ENCODE measurements at regions of chr4 and their contacts with region 1.

Region 1: DNA sequence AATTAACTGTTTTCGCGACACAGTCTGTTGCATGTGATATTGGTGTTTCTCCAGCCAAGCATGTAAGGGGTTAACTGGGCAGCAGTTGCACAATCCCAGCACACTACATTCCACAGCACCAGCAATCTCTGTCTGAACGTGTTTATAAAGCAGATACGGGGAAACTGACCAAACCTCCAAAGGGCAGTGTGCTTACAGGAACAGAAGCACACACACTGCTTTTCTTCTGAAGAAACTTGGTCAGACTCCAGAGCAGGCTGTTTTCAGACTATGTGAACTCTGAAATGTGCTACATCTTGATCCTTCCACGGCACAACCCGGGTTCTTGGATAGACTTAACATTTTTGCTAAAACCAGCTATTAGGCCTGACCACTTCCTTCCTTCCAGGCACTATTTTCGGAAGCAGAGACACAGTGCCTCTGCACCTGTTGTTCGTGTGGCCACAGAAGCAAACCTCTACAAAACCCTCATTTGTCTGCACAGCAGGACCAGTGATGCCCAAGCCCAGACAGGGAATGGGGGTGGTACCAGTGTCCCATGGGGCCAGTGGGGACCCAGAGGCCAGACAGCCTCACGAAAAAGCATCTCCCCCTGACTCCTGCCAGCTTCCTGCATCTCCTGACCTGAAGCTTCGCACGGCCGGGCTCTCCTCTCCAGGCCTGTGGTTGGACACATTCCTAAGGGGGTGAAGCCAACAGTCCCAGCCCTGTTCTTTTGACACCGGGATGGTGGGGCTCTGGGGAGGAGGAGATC is 90.1 kb downstream of the IRF2 start:
- DNase-seq: peak; percentile 86
- ATAC-seq: peak; percentile 77
- H3K4me3 ChIP-seq: peak overlapping the region; percentile 13 to 48 (median 21); a peak in 5 of 6 replicates
- H3K27ac ChIP-seq: peak overlapping the region; percentile 63
- H3K4me1 ChIP-seq: peaks cover 61% of the 10 kb centered on the region
- H3K27me3 ChIP-seq: no peaks in the 10 kb centered on the region
- CTCF ChIP-seq: no peak
- EP300 ChIP-seq: peak; percentile 77 to 87; a peak in 3 of 4 replicates
- POLR2A ChIP-seq: peak in 1 of 2 experiments; percentile 64; a peak in 2 of 4 replicates
- RAD21 ChIP-seq: no peak

Region 2: DNA sequence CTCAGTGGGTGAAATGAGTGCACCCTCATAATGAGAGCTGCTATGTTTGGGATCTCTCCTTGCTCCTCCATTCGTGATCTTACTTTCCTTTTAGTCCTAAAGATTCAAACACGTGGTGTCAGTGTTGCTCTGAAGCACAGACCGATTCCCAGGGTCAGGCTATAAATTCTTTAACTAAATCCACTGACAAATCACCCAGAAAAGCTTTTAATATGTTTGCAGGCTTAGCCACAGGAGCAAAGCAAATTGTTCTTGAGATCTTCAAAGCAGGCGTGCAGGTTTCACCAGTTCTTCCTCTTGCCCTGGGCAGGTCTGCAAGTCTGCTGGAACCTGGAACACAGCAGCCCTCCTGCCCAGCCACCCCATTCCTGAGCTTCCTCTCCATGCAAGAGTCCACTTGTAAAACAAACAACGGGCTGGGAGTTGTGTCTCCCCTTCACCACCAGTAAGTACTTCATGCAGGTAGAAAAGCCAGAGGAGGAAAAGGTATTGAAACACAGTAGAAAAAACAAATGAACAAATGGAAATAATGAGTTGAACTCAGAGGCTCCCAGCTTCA is 96.5 kb before region 1 on chr4:
- CTCF ChIA-PET with region 1: no interaction called
- POLR2A ChIA-PET with region 1: no interaction called
- in situ Hi-C with region 1: no loop called
- intact Hi-C with region 1: loop called (anchors 1 kb)
- DNase-seq: peak; percentile 64
- ATAC-seq: peak; percentile 92
- H3K4me3 ChIP-seq: peak overlapping the region; percentile 38 to 47 (median 44); a peak in 5 of 6 replicates
- H3K27ac ChIP-seq: peak overlapping the region; percentile 44
- H3K4me1 ChIP-seq: peaks cover 58% of the 10 kb centered on the region
- H3K27me3 ChIP-seq: no peaks in the 10 kb centered on the region
- CTCF ChIP-seq: peak; percentile 75
- EP300 ChIP-seq: no peak; a peak in 1 of 4 replicates
- POLR2A ChIP-seq: no peak
- RAD21 ChIP-seq: peak; percentile 43; the same call in 1 of the 2 replicates

Region 3: GRCh38 chr4:184364100-184364921 is 19.9 kb before region 1 on chr4:
- CTCF ChIA-PET with region 1: no interaction called
- POLR2A ChIA-PET with region 1: interaction called, 6 read pairs
- in situ Hi-C with region 1: no loop called
- intact Hi-C with region 1: loop called (anchors 2 kb)
- DNase-seq: peak; percentile 97
- ATAC-seq: peak; percentile 97
- H3K4me3 ChIP-seq: peak overlapping the region in 1 of 3 experiments; percentile 43; a peak in 2 of 6 replicates
- H3K27ac ChIP-seq: peak overlapping the region; percentile 81
- H3K4me1 ChIP-seq: peaks cover 49% of the 10 kb centered on the region
- H3K27me3 ChIP-seq: no peaks in the 10 kb centered on the region
- CTCF ChIP-seq: 0 out of 2 replicates have a peak, but pooled peaks have one; percentile 2
- EP300 ChIP-seq: peak in 1 of 2 experiments; percentile 93; a peak in 2 of 4 replicates
- POLR2A ChIP-seq: peak in 1 of 2 experiments; percentile 56; a peak in 2 of 4 replicates
- RAD21 ChIP-seq: no peak

Region 4: DNA sequence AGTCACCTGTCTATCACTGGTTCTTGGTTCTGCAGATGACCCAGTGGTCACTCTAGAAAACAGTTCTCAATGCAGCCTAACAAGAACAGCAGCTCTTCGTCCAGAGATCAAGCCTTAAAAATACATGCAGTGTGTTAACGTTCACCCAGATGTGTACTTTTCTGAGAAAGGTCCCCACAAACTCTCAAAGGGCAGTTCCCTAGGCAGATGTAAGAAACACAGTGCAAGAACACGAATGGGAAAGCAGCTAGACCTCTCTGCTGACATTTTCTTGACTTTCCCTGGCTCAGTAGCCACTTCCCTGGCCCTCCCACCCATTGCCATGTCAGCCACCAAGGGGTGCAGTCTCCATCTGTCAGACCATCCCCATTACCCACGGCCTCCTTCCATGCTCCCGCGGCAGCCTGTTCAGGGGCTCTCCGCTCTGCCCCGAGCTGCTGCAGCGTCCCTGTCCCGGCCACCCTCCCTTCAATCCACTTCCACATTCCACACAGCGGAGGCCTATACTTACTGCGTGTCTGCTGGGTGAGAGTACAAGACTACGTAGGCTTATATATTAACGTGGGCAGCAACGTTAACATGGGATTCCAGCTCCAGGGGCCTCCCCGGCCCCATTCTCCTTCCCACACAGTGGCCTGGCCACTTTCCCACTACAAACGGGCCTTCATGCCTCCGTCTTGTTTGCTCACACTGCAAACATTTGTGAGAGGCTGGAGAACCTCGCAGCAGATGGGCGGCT is 55.8 kb after region 1 on chr4:
- CTCF ChIA-PET with region 1: no interaction called
- POLR2A ChIA-PET with region 1: interaction called, 5 read pairs
- in situ Hi-C with region 1: no loop called
- intact Hi-C with region 1: loop called (anchors 1 kb)
- DNase-seq: peak; percentile 79
- ATAC-seq: peak; percentile 94
- H3K4me3 ChIP-seq: peak overlapping the region; percentile 51 to 70 (median 55)
- H3K27ac ChIP-seq: peak overlapping the region; percentile 84
- H3K4me1 ChIP-seq: peaks cover 63% of the 10 kb centered on the region
- H3K27me3 ChIP-seq: no peaks in the 10 kb centered on the region
- CTCF ChIP-seq: 0 out of 2 replicates have a peak, but pooled peaks have one; percentile 2
- EP300 ChIP-seq: peak in 1 of 2 experiments; percentile 55; a peak in 2 of 4 replicates
- POLR2A ChIP-seq: peak in 1 of 2 experiments; percentile 58; a peak in 3 of 4 replicates
- RAD21 ChIP-seq: peak; percentile 25; the same call in 1 of the 2 replicates

Region 5: DNA sequence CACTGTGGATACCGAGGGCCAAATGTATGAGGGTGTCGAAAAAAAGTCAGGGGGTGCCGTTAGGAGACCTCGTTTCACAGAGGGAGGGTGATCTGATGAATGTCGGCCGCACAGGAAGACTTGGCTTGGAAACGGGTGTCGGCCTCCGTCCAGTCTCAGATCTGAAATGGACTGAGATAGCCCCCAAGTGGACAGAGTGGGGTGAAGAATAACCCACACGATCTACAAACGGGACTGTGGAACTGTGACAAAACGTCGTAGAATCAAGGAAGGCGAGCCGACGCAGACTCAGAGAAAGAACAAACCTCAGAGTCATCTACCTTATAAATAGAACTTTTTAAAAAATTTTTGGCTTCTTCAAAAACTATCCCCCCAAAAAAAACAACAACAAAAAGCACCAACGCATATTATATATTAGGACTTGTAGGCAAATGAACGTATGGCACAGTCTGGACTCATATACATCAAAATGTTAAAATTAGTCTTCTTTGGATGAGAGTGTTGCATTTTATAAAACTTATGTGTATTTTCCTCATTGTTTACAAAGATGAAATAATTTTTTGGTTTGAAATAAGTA is 153.9 kb after region 1 on chr4:
- CTCF ChIA-PET with region 1: interaction called, 3 read pairs
- POLR2A ChIA-PET with region 1: no interaction called
- in situ Hi-C with region 1: no loop called
- intact Hi-C with region 1: loop called (anchors 2 kb)
- DNase-seq: peak; percentile 85
- ATAC-seq: peak; percentile 92
- H3K4me3 ChIP-seq: peak overlapping the region; percentile 75 to 98 (median 87)
- H3K27ac ChIP-seq: peak overlapping the region; percentile 71
- H3K4me1 ChIP-seq: peaks cover 41% of the 10 kb centered on the region
- H3K27me3 ChIP-seq: no peaks in the 10 kb centered on the region; a peak in 1 of 5 replicates
- CTCF ChIP-seq: peak; percentile 92
- EP300 ChIP-seq: no peak
- POLR2A ChIP-seq: no peak
- RAD21 ChIP-seq: peak; percentile 93

Region 6: GRCh38 chr4:185343726-185344581 is 959.7 kb after region 1 on chr4:
- CTCF ChIA-PET with region 1: no interaction called
- POLR2A ChIA-PET with region 1: no interaction called
- in situ Hi-C with region 1: no loop called
- intact Hi-C with region 1: no loop called
- DNase-seq: no peak
- ATAC-seq: no peak
- H3K4me3 ChIP-seq: no peak overlapping the region
- H3K27ac ChIP-seq: no peak overlapping the region
- H3K4me1 ChIP-seq: no peaks in the 10 kb centered on the region
- H3K27me3 ChIP-seq: no peaks in the 10 kb centered on the region
- CTCF ChIP-seq: no peak
- EP300 ChIP-seq: no peak
- POLR2A ChIP-seq: no peak
- RAD21 ChIP-seq: no peak

Measured in HepG2 (cell line).